ENCODE measurements at regions of chr12 and their contacts with region 1.

Region 1: DNA sequence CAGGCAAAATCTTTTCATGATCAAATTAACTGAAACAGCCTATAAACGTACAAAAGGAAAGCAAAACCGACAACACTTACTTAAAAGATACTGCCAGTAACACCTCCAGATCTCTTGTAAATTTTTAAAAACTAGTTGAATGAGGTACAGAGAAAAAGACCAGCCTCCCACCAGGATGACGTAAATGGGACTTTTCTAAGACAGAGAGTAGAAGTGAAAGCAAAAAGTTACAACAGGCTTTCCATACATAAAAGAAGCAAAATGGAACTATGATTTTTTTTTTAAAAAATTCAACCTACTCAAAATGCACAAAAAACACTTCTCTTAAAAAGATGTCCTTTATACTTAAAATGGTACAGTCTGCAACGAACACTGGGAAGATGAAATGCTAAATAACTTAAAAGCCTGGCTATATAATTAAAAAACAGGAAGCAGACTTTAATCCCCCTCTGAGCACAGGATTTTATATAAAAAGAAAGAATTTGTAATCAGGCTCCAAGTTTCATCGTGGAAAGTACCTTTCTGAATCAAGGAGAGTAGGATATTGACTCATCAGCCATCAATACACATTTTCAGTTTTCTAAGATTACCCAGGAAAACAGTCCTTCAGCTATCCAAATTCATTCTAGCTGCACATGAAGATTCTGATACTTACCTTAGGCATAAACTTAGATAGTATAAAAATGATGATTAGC is 14.2 kb upstream of the MYO1A start:
- DNase-seq: no peak
- ATAC-seq: peak; percentile 79
- H3K4me3 Mint-ChIP-seq: peak overlapping the region; percentile 83
- H3K27ac Mint-ChIP-seq: peak overlapping the region; percentile 92
- H3K4me1 Mint-ChIP-seq: peaks cover 37% of the 10 kb centered on the region
- H3K27me3 Mint-ChIP-seq: no peaks in the 10 kb centered on the region
- CTCF ChIP-seq: no peak

Region 2: DNA sequence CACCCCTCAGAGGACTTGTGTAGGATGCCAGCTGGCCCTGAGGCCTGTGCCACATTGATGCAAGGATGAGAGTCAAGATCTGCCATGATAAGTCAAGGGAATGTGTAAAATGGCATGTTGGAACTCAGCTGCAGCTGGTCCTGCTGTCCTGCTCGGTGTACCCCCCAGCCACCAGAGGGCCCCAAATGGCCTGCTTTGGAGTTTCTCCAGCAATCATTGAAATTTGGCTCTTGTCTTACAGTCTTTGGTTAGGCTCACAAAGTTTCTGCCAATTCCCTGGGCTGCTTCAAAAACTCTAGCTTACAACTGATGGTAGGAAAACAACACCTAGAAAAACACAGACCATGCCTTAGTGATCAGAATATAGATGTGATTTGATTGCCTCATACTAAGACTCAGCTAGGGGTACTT is 224.2 kb before region 1 on chr12:
- CTCF ChIA-PET with region 1: interaction called, 3 read pairs
- POLR2A ChIA-PET with region 1: no interaction called
- intact Hi-C with region 1: loop called (anchors 2 kb)
- DNase-seq: no peak
- ATAC-seq: peak; percentile 47
- H3K4me3 Mint-ChIP-seq: no peak overlapping the region
- H3K27ac Mint-ChIP-seq: no peak overlapping the region
- H3K4me1 Mint-ChIP-seq: peaks cover 12% of the 10 kb centered on the region
- H3K27me3 Mint-ChIP-seq: peaks cover 9% of the 10 kb centered on the region
- CTCF ChIP-seq: no peak

Region 3: GRCh38 chr12:56863789-56864188 is 200.3 kb before region 1 on chr12:
- CTCF ChIA-PET with region 1: no interaction called
- POLR2A ChIA-PET with region 1: no interaction called
- intact Hi-C with region 1: no loop called
- DNase-seq: no peak
- ATAC-seq: no peak
- H3K4me3 Mint-ChIP-seq: no peak overlapping the region
- H3K27ac Mint-ChIP-seq: no peak overlapping the region
- H3K4me1 Mint-ChIP-seq: no peaks in the 10 kb centered on the region
- H3K27me3 Mint-ChIP-seq: peaks cover 15% of the 10 kb centered on the region
- CTCF ChIP-seq: no peak

Region 4: GRCh38 chr12:56987551-56988053 is 76.5 kb before region 1 on chr12:
- CTCF ChIA-PET with region 1: no interaction called
- POLR2A ChIA-PET with region 1: no interaction called
- intact Hi-C with region 1: no loop called
- DNase-seq: peak; percentile 66
- ATAC-seq: peak; percentile 96
- H3K4me3 Mint-ChIP-seq: peak overlapping the region; percentile 35
- H3K27ac Mint-ChIP-seq: no peak overlapping the region
- H3K4me1 Mint-ChIP-seq: peaks cover 12% of the 10 kb centered on the region
- H3K27me3 Mint-ChIP-seq: peaks cover 6% of the 10 kb centered on the region
- CTCF ChIP-seq: peak; percentile 89

Region 5: GRCh38 chr12:57005980-57006808 is 57.9 kb before region 1 on chr12 and contains the start of gene ZBTB39:
- CTCF ChIA-PET with region 1: interaction called, 89 read pairs
- POLR2A ChIA-PET with region 1: no interaction called
- intact Hi-C with region 1: loop called (anchors 1 kb)
- DNase-seq: peak; percentile 81
- ATAC-seq: peak; percentile 93
- H3K4me3 Mint-ChIP-seq: peak within 1 kb of the TSS; percentile 90
- H3K27ac Mint-ChIP-seq: peak within 1 kb of the TSS; percentile 82
- H3K4me1 Mint-ChIP-seq: peaks cover 35% of the 10 kb centered on the region
- H3K27me3 Mint-ChIP-seq: no peaks in the 10 kb centered on the region
- CTCF ChIP-seq: no peak
- total RNA-seq, gene ZBTB39: 12.6 and 13.3 TPM in 2 replicates

Region 6: GRCh38 chr12:57031138-57031725 is 32.9 kb before region 1 on chr12:
- CTCF ChIA-PET with region 1: interaction called, 49 read pairs
- POLR2A ChIA-PET with region 1: interaction called, 3 read pairs
- intact Hi-C with region 1: loop called (anchors 1 kb)
- DNase-seq: no peak
- ATAC-seq: peak; percentile 69
- H3K4me3 Mint-ChIP-seq: no peak overlapping the region
- H3K27ac Mint-ChIP-seq: peak overlapping the region; percentile 72
- H3K4me1 Mint-ChIP-seq: peaks cover 14% of the 10 kb centered on the region
- H3K27me3 Mint-ChIP-seq: no peaks in the 10 kb centered on the region
- CTCF ChIP-seq: no peak

Region 7: GRCh38 chr12:57046947-57047890 is 16.9 kb before region 1 on chr12:
- CTCF ChIA-PET with region 1: interaction called, 7 read pairs
- POLR2A ChIA-PET with region 1: interaction called, 11 read pairs
- intact Hi-C with region 1: loop called (anchors 2 kb)
- DNase-seq: no peak
- ATAC-seq: peak; percentile 64
- H3K4me3 Mint-ChIP-seq: peak overlapping the region; percentile 53
- H3K27ac Mint-ChIP-seq: peak overlapping the region; percentile 75
- H3K4me1 Mint-ChIP-seq: peaks cover 22% of the 10 kb centered on the region
- H3K27me3 Mint-ChIP-seq: no peaks in the 10 kb centered on the region
- CTCF ChIP-seq: no peak

Region 8: GRCh38 chr12:57088459-57089248 is 24.5 kb after region 1 on chr12 and contains the start of gene NAB2:
- CTCF ChIA-PET with region 1: interaction called, 102 read pairs
- POLR2A ChIA-PET with region 1: interaction called, 337 read pairs
- intact Hi-C with region 1: loop called (anchors 1 kb)
- DNase-seq: peak; percentile 89
- ATAC-seq: peak; percentile 66
- H3K4me3 Mint-ChIP-seq: peak within 1 kb of the TSS; percentile 91
- H3K27ac Mint-ChIP-seq: peak within 1 kb of the TSS; percentile 96
- H3K4me1 Mint-ChIP-seq: peaks cover 55% of the 10 kb centered on the region
- H3K27me3 Mint-ChIP-seq: no peaks in the 10 kb centered on the region
- CTCF ChIP-seq: no peak
- total RNA-seq, gene NAB2: 20.4 and 22.1 TPM in 2 replicates

Region 9: GRCh38 chr12:57157588-57158173 is 93.5 kb after region 1 on chr12:
- CTCF ChIA-PET with region 1: no interaction called
- POLR2A ChIA-PET with region 1: no interaction called
- intact Hi-C with region 1: no loop called
- DNase-seq: no peak
- ATAC-seq: no peak
- H3K4me3 Mint-ChIP-seq: no peak overlapping the region
- H3K27ac Mint-ChIP-seq: no peak overlapping the region
- H3K4me1 Mint-ChIP-seq: peaks cover 9% of the 10 kb centered on the region
- H3K27me3 Mint-ChIP-seq: peaks cover 7% of the 10 kb centered on the region
- CTCF ChIP-seq: no peak

Measured in activated B cell treated with CpG ODN at 0.5 μM for 24 hours (primary cell).